HCT116 (cell line): ENCODE measurements at regions of chr7 and their contacts with region 1.

Region 1: DNA sequence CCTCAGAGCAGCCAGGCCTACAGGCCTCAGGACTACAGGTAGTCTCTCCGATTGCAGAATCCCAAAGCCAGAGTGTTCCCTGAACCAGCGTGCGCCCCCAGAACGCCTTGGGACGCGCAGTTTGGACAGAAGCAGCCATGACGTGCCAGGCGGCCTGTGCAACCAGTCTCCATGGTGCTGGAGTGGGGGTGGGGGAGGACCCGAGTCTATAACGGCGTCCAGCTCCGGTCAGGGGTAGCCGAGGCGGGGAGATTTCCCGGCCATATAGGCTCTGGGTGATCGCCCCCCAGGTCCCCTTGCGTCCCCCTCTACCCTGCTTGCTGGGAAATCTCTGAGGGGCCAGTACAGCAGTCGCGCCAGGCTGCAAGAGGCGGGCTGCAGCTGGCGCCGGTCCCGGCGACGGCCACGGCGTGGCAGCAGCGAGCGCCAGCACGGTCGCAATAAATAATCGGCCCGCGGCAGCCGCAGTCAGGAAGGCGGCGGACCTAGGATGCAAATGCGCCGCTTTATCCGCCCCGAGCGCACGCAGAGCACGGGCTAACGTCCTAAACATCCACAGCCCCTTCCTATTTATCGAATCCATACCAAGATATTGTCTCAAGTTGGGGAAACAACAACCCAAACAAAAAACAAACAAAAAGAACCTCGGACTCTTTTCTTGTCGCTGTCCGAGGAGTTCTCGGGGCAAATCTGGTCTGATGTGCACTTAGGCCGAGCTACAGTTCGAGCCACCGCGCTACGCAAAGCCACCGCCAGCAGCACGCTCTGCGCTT is 1.6 kb downstream of the HOXA3 start:
- DNase-seq: no peak
- ATAC-seq: peak; percentile 62
- H3K4me3 ChIP-seq: peak overlapping the region; percentile 60 to 71
- H3K27ac ChIP-seq: peak overlapping the region; percentile 82
- H3K4me1 ChIP-seq: peaks cover 30 to 69% of the 10 kb centered on the region in 2 experiments
- H3K27me3 ChIP-seq: no peaks in the 10 kb centered on the region
- CTCF ChIP-seq: peak in 2 of 3 experiments; percentile 76 to 83; a peak in 4 of 6 replicates
- POLR2A ChIP-seq: peak; percentile 83
- RAD21 ChIP-seq: no peak

Region 2: DNA sequence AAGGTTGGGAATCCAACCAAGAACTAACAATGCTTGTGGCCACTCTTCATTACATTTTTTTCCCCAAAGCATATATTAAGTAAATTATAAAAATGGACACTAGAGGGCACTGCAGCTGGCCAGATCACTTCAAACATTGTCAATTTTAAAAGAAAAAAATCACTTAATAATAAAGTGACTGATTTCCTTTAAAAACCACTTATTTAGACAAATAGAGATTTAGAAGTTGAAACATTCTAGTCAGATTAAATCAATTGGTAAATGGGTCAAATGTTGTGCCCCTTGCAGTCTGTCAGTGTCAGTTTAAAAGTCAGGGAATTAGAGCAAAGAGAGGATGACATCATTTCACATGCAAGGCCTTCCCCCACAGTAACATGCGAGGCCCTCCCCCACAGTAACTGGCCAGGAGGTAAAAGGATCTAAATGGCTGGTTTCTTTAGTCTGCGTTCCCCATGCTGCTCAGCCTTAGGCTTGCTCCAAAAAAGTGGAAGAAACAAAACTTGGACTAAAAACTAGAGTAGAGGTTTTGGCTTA is 464.2 kb before region 1 on chr7:
- CTCF ChIA-PET with region 1: interaction called, 12 read pairs
- POLR2A ChIA-PET with region 1: interaction called, 8 read pairs
- RAD21 ChIA-PET with region 1: interaction called in 1 of 2 experiments, 3 read pairs
- intact Hi-C with region 1: no loop called
- DNase-seq: peak; percentile 21
- ATAC-seq: peak; percentile 78
- H3K4me3 ChIP-seq: no peak overlapping the region
- H3K27ac ChIP-seq: no peak overlapping the region
- H3K4me1 ChIP-seq: peaks cover 4 to 11% of the 10 kb centered on the region in 2 experiments; a peak in 3 of 4 replicates
- H3K27me3 ChIP-seq: no peaks in the 10 kb centered on the region
- CTCF ChIP-seq: peak; percentile 53 to 72 (median 66)
- POLR2A ChIP-seq: no peak
- RAD21 ChIP-seq: peak; percentile 71

Region 3: GRCh38 chr7:26853788-26854393 is 296.9 kb before region 1 on chr7:
- CTCF ChIA-PET with region 1: interaction called, 5 read pairs
- POLR2A ChIA-PET with region 1: no interaction called
- RAD21 ChIA-PET with region 1: interaction called in 1 of 2 experiments, 3 read pairs
- intact Hi-C with region 1: loop called (anchors 5 kb)
- DNase-seq: peak; percentile 31
- ATAC-seq: peak; percentile 67
- H3K4me3 ChIP-seq: no peak overlapping the region
- H3K27ac ChIP-seq: no peak overlapping the region
- H3K4me1 ChIP-seq: peaks cover 0 to 15% of the 10 kb centered on the region in 2 experiments; a peak in 3 of 4 replicates
- H3K27me3 ChIP-seq: no peaks in the 10 kb centered on the region
- CTCF ChIP-seq: peak; percentile 50 to 76 (median 58); a peak in 5 of 6 replicates
- POLR2A ChIP-seq: no peak
- RAD21 ChIP-seq: peak; percentile 76